Heart left ventricle (tissue), 16 donors: ENCODE measurements at regions of chr19 and their contacts with region 1.

Region 1: DNA sequence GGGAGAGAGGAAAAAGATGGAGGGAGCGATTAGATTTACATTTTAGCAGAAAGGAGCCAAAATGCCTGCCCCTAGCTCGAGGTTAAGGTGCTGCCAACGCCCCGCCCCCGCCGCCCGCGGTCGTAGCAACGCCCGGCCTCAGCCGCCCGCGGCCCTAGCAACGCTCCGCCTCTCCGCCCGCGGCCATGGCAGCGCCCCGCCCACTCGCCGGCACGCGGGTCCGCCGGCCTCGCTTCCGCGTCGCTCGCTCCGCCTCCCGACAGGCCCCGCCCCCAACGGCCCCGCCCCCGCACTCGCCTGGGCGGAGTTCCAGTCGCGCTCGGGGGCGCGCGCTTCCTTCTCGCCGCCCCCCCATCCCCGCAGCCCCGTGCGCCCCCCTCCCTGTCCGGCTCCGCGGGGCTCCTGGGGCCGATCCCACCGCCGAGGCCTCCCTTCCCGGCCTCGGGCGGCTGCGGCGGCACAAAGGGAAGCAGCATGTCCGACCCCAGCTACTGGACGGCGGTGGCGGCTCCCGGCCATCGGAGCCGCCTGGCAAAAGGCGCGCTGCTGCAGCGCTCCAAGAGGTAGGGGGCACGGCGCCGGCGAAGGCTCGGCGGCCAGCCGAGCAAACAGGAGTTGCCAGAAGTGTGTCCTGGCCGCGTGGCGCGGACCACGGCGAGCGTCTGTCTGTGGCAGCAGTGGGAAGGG is 20.3 kb downstream of the MAST3 start:
- DNase-seq: peak; percentile 90 to 96 (median 92)
- ATAC-seq: peak; percentile 71 to 97 (median 92)
- H3K4me3 ChIP-seq: peak overlapping the region; percentile 61 to 93 (median 78)
- H3K27ac ChIP-seq: peak overlapping the region in 10 of 12 donors; percentile 51 to 83 (median 71)
- H3K4me1 ChIP-seq: peaks cover 0 to 39% (median 20%) of the 10 kb centered on the region in 12 donors
- H3K27me3 ChIP-seq: no peaks in the 10 kb centered on the region
- CTCF ChIP-seq: peak in 1 of 12 donors; percentile 5
- POLR2A ChIP-seq: no peak

Region 2: DNA sequence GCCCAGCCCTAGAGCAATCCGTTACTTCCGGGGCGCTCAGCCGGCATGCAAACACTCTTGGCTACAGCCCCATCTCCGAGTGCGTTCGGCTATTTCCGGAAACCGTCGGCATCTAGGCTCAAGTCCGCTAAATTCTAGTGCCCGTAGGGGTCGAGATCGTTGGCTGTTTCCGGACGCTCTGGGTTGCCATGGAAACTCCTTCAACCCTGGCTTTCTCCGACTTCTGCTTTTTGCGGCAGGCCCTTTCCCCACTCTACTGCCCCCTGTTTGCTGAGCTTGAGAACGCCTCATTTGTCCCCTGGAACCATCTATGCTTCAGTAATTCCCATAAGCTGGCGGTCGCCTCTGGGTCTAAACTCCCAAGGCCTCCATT is 34.6 kb after region 1 on chr19:
- intact Hi-C with region 1: loop called in 9 of 10 experiments (anchors 2 to 5 kb)
- DNase-seq: peak; percentile 95 to 98 (median 97)
- ATAC-seq: peak; percentile 55 to 77 (median 74)
- H3K4me3 ChIP-seq: peak overlapping the region; percentile 81 to 98 (median 94)
- H3K27ac ChIP-seq: peak overlapping the region; percentile 86 to 99 (median 95)
- H3K4me1 ChIP-seq: peaks cover 8 to 47% (median 27%) of the 10 kb centered on the region in 12 donors
- H3K27me3 ChIP-seq: no peaks in the 10 kb centered on the region
- CTCF ChIP-seq: peak; percentile 37 to 79 (median 58)
- POLR2A ChIP-seq: no peak

Region 3: DNA sequence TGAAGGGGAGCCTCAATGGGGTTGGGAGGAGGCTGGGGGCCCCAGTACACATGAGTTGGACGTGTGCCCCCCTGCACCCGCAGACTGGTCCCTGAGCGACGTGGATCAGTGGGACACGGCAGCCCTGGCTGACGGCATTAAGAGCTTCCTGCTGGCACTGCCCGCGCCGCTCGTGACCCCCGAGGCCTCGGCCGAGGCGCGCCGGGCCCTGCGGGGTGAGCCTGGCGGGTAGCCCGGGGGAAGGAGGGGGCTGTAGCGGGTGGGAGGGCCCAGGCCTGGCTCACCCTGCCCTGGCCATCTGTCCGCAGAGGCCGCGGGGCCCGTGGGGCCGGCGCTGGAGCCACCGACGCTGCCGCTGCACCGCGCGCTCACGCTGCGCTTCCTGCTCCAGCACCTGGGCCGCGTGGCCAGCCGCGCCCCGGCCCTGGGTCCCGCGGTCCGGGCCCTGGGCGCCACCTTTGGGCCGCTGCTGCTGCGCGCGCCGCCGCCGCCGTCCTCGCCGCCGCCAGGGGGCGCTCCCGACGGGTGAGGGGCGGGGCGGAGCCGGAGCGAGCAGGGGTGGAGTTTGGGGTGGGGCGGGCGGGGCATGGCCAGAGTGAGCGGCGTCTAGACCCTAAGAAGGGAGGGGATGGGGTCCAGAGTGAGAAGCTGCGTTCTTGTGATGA is 43.3 kb after region 1 on chr19:
- intact Hi-C with region 1: loop called in 7 of 10 experiments (anchors 2 to 5 kb)
- DNase-seq: peak; percentile 68 to 89 (median 76)
- ATAC-seq: peak; percentile 17 to 80 (median 64)
- H3K4me3 ChIP-seq: peak overlapping the region in 11 of 12 donors; percentile 16 to 61 (median 52)
- H3K27ac ChIP-seq: peak overlapping the region; percentile 69 to 93 (median 84)
- H3K4me1 ChIP-seq: peaks cover 5 to 41% (median 27%) of the 10 kb centered on the region in 12 donors
- H3K27me3 ChIP-seq: no peaks in the 10 kb centered on the region
- CTCF ChIP-seq: peak; percentile 32 to 92 (median 66)
- POLR2A ChIP-seq: no peak

Region 4: DNA sequence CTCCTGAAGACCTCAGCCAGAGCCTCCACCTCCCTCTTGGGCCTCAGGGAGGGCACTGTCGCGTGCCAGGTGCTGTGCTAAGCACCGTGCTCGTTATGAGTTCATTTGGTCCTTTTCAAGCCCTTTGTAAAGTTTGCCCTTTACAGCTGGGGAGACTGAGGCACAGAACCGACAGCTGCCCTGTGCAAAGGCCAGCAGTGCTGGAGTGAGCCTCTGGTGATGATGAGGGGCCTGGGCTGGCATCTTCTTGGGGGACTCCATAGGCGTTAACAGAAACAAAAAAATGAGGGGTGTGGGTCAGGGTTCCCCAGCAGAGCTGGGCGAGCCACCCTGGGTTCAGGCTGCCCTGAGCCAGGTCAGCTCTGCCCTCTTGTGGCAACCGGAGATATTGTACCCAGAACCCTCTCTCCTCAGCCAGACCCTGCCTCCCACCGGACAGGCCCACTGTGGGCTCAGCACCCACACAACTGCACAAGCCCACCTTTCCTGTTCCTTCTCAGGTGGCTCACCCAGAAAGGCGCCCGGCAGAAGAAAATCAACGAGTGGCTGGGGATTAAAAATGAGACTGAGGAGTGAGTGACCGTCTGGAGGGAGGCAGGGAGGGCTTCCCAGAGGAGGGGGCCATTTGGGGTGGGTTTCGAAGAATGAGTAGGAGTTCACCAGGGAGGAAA is 50.3 kb after region 1 on chr19:
- intact Hi-C with region 1: loop called in 7 of 10 experiments (anchors 2 to 5 kb)
- DNase-seq: peak in 3 of 5 donors; percentile 33 to 52 (median 46)
- ATAC-seq: peak; percentile 15 to 62 (median 53)
- H3K4me3 ChIP-seq: no peak overlapping the region
- H3K27ac ChIP-seq: peak overlapping the region in 1 of 12 donors; percentile 95
- H3K4me1 ChIP-seq: peaks cover 0 to 40% (median 12%) of the 10 kb centered on the region in 12 donors
- H3K27me3 ChIP-seq: no peaks in the 10 kb centered on the region
- CTCF ChIP-seq: peak; percentile 45 to 76 (median 67)
- POLR2A ChIP-seq: no peak

Region 5: GRCh38 chr19:18173572-18174288 is 55.9 kb after region 1 on chr19 and contains the start of gene IFI30:
- intact Hi-C with region 1: loop called in 5 of 10 experiments (anchors 2 to 5 kb)
- DNase-seq: peak; percentile 74 to 90 (median 80)
- ATAC-seq: peak; percentile 49 to 82 (median 80)
- H3K4me3 ChIP-seq: peak within 1 kb of the TSS; percentile 43 to 90 (median 64)
- H3K27ac ChIP-seq: peak within 1 kb of the TSS; percentile 6 to 95 (median 56)
- H3K4me1 ChIP-seq: peaks cover 0 to 76% (median 20%) of the 10 kb centered on the region in 12 donors
- H3K27me3 ChIP-seq: no peaks in the 10 kb centered on the region
- CTCF ChIP-seq: no peak
- POLR2A ChIP-seq: peak in 1 of 2 donors; percentile 55
- total RNA-seq, gene IFI30: 9.0 to 455 (median 15.2) TPM

Region 6: DNA sequence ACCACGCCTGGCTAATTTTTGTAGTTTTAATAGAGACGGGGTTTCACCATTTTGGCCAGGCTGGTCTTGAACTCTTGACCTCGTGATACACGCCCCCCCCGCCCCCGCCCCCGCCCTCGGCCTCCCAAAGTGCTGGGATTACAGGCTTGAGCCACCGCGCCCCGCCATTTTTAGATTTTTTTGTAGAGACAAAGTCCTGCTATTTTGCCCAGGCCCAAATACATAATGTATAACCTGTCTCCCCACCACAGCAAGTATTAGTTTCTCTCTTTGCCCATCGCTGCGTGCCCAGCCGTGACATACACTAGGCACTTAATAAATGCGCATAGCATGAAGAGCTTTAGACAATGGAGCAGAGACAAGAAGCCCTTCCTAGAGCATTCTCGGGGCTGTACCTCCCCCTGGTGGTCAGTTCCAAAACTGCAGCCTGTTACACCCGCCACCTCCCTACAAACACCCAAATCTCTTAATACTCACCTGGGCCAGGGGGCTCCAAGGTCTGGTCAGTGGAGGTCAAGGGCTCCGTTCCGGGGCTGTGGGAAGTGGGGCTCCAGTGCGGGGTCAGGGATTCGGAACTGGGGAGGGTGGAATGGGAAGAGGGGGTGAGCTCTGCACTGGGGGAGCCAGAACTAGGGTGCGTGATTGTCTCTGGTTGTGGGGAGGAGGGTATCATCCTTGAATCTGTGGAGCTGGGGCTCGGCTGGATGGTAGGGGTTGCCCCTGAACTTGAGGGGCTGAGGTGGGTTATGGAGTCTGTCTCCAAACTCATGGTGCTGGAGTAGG is 133.9 kb after region 1 on chr19:
- intact Hi-C with region 1: loop called (anchors 1 to 5 kb)
- DNase-seq: peak in 4 of 5 donors; percentile 46 to 72 (median 62)
- ATAC-seq: peak; percentile 55 to 84 (median 75)
- H3K4me3 ChIP-seq: no peak overlapping the region
- H3K27ac ChIP-seq: no peak overlapping the region
- H3K4me1 ChIP-seq: peaks cover 0 to 10% (median 0%) of the 10 kb centered on the region in 12 donors
- H3K27me3 ChIP-seq: peaks cover 0 to 12% (median 4%) of the 10 kb centered on the region in 9 donors
- CTCF ChIP-seq: peak; percentile 84 to 95 (median 92)
- POLR2A ChIP-seq: no peak

Region 7: GRCh38 chr19:18419195-18419698 is 301.4 kb after region 1 on chr19 and contains the start of gene SSBP4:
- intact Hi-C with region 1: loop called in 1 of 10 experiments (anchors 5 kb)
- DNase-seq: peak; percentile 74 to 88 (median 84)
- ATAC-seq: peak in 2 of 4 donors; percentile 10 to 22
- H3K4me3 ChIP-seq: peak within 1 kb of the TSS; percentile 52 to 99 (median 80)
- H3K27ac ChIP-seq: peak within 1 kb of the TSS; percentile 89 to 100 (median 95)
- H3K4me1 ChIP-seq: peaks cover 8 to 90% (median 69%) of the 10 kb centered on the region in 12 donors
- H3K27me3 ChIP-seq: peaks cover 0 to 22% (median 0%) of the 10 kb centered on the region in 9 donors
- CTCF ChIP-seq: peak in 8 of 12 donors; percentile 14 to 69 (median 45)
- POLR2A ChIP-seq: peak in 1 of 2 donors; percentile 50
- total RNA-seq, gene SSBP4: 23.5 to 89.8 (median 29.4) TPM

Region 8: GRCh38 chr19:18644196-18645034 is 526.6 kb after region 1 on chr19:
- intact Hi-C with region 1: no loop called
- DNase-seq: no peak
- ATAC-seq: peak in 2 of 4 donors; percentile 63 to 71
- H3K4me3 ChIP-seq: peak overlapping the region in 8 of 12 donors; percentile 3 to 44 (median 30)
- H3K27ac ChIP-seq: peak overlapping the region in 8 of 12 donors; percentile 28 to 82 (median 52)
- H3K4me1 ChIP-seq: peaks cover 0 to 36% (median 17%) of the 10 kb centered on the region in 12 donors
- H3K27me3 ChIP-seq: no peaks in the 10 kb centered on the region
- CTCF ChIP-seq: no peak
- POLR2A ChIP-seq: no peak